A549 (cell line): ENCODE measurements at regions of chrX and their contacts with region 1.

Region 1: GRCh38 chrX:17788439-17788838 is 51.1 kb downstream of the SCML1 start:
- DNase-seq: peak; percentile 33 to 53
- ATAC-seq: peak; percentile 82 to 93
- H3K4me3 ChIP-seq: no peak overlapping the region
- H3K27ac ChIP-seq: no peak overlapping the region
- H3K4me1 ChIP-seq: no peaks in the 10 kb centered on the region
- CTCF ChIP-seq: peak; percentile 58
- EP300 ChIP-seq: no peak
- POLR2A ChIP-seq: no peak
- RAD21 ChIP-seq: peak; percentile 55 to 67

Region 2: GRCh38 chrX:17747692-17748091 is 40.7 kb before region 1 on chrX:
- CTCF ChIA-PET with region 1: no interaction called
- POLR2A ChIA-PET with region 1: no interaction called
- DNase-seq: no peak
- ATAC-seq: no peak
- H3K4me3 ChIP-seq: no peak overlapping the region
- H3K27ac ChIP-seq: no peak overlapping the region
- H3K4me1 ChIP-seq: peaks cover 13% of the 10 kb centered on the region; the same call in 2 of the 3 replicates
- CTCF ChIP-seq: no peak
- EP300 ChIP-seq: no peak
- POLR2A ChIP-seq: no peak
- RAD21 ChIP-seq: no peak

Region 3: DNA sequence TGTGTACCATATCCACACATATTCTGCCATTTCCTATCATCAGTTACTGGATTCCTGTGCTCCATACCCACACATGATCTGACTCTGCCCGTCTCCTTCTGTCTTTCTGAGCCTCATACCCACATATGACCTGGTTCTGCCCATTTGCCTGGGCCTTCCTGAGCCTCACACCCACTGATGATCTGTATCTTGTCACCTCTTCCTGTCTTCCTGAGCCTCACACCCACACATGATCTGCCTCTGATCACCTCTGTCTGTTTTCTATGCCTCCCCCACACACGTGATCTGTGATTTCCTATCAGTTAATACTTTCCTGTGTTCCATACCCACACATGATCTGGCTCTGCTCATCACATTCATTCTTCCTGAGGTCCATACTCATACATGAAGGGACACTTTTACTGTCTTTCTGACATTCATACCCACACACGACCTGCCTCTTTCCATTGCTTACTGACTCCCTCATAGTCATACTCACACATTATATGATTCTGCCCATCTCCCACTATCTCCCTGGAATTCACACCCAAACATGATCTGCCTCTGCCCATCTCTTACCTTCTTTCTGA is 18.7 kb before region 1 on chrX:
- CTCF ChIA-PET with region 1: no interaction called
- POLR2A ChIA-PET with region 1: no interaction called
- DNase-seq: no peak
- ATAC-seq: no peak
- H3K4me3 ChIP-seq: no peak overlapping the region
- H3K27ac ChIP-seq: no peak overlapping the region
- H3K4me1 ChIP-seq: no peaks in the 10 kb centered on the region
- CTCF ChIP-seq: no peak
- EP300 ChIP-seq: no peak
- POLR2A ChIP-seq: no peak
- RAD21 ChIP-seq: no peak

Region 4: DNA sequence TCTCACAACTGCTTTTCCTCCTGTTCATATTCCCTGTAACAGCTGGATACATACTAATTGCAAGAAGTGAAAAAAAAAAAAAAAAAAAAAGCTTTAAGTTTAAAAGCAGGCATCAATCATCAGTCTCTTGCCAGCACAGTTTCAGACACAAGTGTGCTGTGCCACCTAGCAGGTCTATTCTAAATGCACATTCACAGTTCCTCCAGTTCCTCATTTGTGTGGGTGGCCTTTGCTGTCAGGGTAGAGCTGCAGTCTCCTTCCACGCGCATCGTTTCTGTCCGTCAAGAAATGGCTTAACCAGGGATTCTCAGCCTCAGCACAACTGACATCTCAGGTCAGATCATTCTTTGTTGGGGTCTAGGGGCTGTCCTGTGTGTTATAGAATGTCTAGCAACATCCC is 10.5 kb after region 1 on chrX:
- CTCF ChIA-PET with region 1: interaction called, 18 read pairs
- POLR2A ChIA-PET with region 1: no interaction called
- DNase-seq: no peak
- ATAC-seq: no peak
- H3K4me3 ChIP-seq: no peak overlapping the region
- H3K27ac ChIP-seq: no peak overlapping the region
- H3K4me1 ChIP-seq: no peaks in the 10 kb centered on the region
- CTCF ChIP-seq: no peak
- EP300 ChIP-seq: no peak
- POLR2A ChIP-seq: no peak
- RAD21 ChIP-seq: no peak

Region 5: DNA sequence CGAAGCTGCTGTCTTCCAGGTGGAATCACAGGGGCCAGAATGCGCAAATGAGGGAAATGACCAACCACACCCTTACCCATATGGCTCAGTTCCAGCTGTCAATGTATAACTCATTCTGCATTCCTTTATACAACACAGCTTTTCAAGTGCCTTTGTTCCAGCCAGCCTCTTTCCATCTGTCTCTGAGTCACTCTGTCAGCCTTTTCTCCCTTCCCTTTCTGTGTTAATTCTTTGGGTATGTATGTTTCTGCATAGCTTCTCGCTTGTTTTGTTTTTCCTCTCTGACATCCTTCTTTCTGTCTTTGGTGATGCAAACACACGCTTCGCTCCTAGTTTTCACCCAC is 828.9 kb after region 1 on chrX:
- CTCF ChIA-PET with region 1: no interaction called
- POLR2A ChIA-PET with region 1: no interaction called
- DNase-seq: peak; percentile 27 to 75
- ATAC-seq: peak; percentile 91 to 95
- H3K4me3 ChIP-seq: no peak overlapping the region
- H3K27ac ChIP-seq: peak overlapping the region; percentile 55 to 80; a peak in 5 of 6 replicates
- H3K4me1 ChIP-seq: peaks cover 20% of the 10 kb centered on the region
- CTCF ChIP-seq: no peak
- EP300 ChIP-seq: no peak
- POLR2A ChIP-seq: no peak
- RAD21 ChIP-seq: 0 out of 5 replicates have a peak, but pooled peaks have one; percentile 1 to 14